Heart right ventricle (tissue), 16 donors: ENCODE measurements at regions of chr6 and their contacts with region 1.

Region 1: GRCh38 chr6:46510651-46511050 is 19.4 kb upstream of the RCAN2 start:
- DNase-seq: peak in 1 of 2 donors; percentile 54
- ATAC-seq: peak in 6 of 8 donors; percentile 23 to 77 (median 63)
- H3K4me3 ChIP-seq: no peak overlapping the region
- H3K27ac ChIP-seq: peak overlapping the region; percentile 48 to 85 (median 80)
- H3K4me1 ChIP-seq: peaks cover 3 to 82% (median 61%) of the 10 kb centered on the region in 9 donors
- H3K27me3 ChIP-seq: no peaks in the 10 kb centered on the region
- CTCF ChIP-seq: no peak

Region 2: DNA sequence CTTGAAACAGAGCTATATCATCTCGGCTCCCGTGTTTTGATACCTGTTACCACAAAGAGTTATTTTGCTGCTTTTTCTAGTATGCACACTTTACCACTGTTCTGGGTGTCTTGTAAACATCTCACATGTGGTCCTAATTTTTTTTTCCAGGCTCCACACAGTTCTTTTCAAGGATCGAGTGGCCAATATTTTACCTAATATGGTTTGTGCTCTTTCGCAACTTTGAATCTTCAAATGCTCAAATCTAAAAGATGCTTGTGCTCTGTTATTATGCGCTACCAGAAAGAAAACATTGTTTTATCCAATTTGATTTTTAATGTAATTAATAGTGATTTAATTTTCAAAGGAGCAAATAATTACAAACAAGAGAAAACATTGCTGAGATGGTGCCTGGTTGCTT is 350.5 kb before region 1 on chr6:
- intact Hi-C with region 1: no loop called
- DNase-seq: no peak
- ATAC-seq: no peak
- H3K4me3 ChIP-seq: no peak overlapping the region
- H3K27ac ChIP-seq: no peak overlapping the region
- H3K4me1 ChIP-seq: no peaks in the 10 kb centered on the region
- H3K27me3 ChIP-seq: no peaks in the 10 kb centered on the region
- CTCF ChIP-seq: no peak

Region 3: GRCh38 chr6:46606338-46606737 is 95.7 kb after region 1 on chr6:
- intact Hi-C with region 1: loop called in 3 of 10 experiments (anchors 5 to 10 kb)
- DNase-seq: no peak
- ATAC-seq: peak in 6 of 8 donors; percentile 54 to 85 (median 78)
- H3K4me3 ChIP-seq: no peak overlapping the region
- H3K27ac ChIP-seq: no peak overlapping the region
- H3K4me1 ChIP-seq: peaks cover 0 to 37% (median 9%) of the 10 kb centered on the region in 9 donors
- H3K27me3 ChIP-seq: no peaks in the 10 kb centered on the region
- CTCF ChIP-seq: no peak